RWPE1 (cell line): ENCODE measurements at regions of chr1 and their contacts with region 1.

Region 1: DNA sequence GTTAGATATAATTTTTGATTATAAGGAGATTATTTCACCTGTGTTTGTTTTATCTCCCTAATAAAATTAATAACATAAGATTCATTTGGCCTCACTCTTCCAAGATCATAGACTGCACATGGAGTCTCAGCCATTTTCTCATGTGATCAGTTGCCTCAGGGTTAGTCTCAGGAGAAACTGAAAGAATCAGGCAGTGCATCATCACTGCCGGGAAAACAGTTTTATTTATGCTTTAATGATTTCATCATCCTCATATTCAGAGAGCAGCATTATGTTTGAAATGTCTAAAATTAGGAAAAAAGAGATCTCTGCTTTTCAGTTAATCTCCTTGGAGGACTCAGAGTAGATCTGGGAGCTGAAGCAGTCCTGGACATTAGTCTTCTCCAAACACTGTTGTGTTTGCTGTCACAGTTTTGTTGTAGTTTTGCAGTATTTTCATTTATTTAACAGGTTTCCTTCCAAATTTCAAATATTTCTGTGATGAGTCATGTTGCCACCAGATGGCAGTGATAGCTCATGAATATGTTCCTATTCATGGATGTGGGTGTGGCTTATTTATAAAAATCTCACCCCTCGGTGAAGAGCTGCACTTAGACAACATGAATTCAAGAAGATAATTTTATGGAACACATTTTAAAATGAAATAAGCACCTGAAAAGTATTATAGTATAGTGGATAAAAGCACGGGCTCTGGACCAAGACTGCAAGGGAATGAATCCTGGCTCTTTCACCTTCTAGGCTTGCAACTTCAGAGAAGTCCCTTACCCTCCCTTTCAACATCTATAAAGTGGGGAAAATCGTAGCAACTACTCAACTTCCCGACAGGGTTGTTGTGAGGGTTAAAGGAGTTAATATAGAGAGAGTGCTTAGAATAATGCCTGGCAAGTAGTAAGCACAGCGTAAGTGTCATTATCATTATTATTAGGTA is 31.2 kb downstream of the CHD1L start:
- DNase-seq: peak; percentile 74
- H3K27ac ChIP-seq: no peak overlapping the region
- CTCF ChIP-seq: peak; percentile 60

Region 2: GRCh38 chr1:147142886-147143285 is 130.8 kb before region 1 on chr1:
- CTCF ChIA-PET with region 1: no interaction called
- POLR2A ChIA-PET with region 1: no interaction called
- DNase-seq: no peak
- H3K27ac ChIP-seq: no peak overlapping the region
- CTCF ChIP-seq: no peak

Region 3: DNA sequence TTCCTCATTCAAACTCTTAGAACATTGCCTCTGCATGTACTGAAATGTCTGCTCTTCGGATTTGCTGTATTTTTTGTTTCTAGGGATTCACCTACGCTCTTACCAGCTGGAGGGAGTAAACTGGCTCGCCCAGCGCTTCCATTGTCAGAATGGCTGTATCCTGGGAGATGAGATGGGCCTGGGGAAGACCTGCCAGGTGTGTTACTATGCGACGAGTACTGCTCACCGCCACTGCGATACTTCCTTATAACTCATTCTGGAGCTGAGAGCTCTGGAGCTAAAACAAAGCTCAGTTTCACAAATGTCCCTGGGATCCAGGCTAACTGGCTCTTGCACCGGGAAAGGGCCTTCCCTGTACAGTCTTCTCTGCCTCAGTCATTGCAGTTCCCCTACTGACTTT is 21.1 kb before region 1 on chr1:
- CTCF ChIA-PET with region 1: no interaction called
- POLR2A ChIA-PET with region 1: no interaction called
- DNase-seq: no peak
- H3K27ac ChIP-seq: no peak overlapping the region
- CTCF ChIP-seq: no peak

Region 4: DNA sequence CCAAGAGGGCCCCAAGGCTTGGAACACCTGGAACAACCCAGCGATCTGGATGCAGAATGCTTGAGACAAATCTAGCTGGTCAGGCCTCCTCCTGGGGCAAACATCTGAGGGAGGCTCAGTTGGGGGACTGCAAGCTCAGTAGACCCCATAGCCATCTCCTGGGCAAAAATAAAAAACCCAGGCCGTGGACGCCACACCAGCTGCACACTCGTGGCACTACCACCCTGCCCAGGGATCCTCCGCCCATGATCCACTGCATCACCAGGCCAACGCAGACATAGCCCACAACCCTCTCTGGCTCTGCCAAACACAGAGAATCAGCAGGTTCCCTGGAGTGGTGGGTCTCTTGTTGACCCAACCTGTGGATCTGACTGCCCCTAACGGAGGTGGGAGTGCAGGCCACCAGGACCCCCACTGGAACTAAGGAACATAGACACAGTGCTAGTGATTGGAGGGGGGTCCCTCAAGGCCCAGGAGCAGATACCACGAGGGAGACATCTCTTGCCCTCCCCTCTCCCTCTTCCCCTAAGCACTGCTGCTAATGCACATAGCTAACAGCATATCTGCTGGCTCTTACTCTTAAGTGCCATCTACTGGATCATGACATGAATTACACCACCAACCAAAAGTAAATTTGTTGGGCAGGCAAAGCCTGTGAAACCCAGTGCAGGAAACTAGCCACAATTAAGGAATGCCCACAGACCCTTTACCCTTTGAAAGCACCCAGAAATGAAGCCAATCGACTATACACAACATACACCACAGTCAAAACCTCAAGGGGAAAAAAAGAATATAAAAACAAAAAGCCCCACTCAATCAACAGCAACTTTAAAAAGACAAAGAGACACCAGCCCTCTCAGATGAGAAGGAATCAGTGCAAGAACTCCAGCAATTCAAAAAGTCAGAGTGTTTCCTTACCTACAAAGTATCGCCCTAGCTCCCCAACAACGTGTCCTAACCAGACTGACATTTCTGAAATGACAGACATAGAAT is 116.2 kb after region 1 on chr1:
- CTCF ChIA-PET with region 1: interaction called, 38 read pairs
- POLR2A ChIA-PET with region 1: no interaction called
- DNase-seq: peak; percentile 29
- H3K27ac ChIP-seq: no peak overlapping the region
- CTCF ChIP-seq: peak; percentile 70

Region 5: DNA sequence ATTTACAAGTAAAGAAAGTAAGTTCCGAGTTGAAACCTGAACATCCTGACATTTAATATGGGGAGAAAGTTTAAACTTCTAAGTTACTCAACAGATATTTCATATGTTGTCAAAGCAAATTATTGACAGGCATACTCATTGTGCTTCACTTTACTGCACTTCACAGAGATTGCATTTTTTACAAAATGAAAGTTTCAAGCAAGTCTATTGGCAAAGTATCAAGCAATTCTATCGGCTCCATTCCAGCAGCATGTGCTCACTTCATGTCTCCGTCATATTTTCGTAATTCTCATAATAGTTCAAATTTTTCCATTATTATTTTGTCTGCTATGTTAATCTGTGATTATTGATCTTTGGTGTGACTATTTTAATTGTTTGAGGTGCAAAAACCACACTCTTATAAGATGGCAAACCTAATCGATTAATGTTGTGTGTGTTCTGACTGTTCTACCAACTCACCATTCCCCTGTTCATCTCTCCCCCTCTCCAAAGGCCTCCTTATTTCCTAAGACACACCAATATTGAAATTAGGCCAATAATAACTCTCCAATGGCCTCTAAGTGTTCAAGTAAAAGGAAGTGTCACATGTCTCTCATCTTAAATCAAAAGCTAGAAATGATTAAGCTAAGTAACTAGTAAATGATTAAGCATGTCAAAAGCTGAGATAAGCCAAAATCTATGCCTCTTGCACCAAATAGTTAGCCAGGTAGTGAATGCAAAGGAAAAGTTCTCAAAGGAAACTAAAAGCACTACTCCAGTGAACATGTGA is 199.5 kb after region 1 on chr1:
- CTCF ChIA-PET with region 1: no interaction called
- POLR2A ChIA-PET with region 1: no interaction called
- DNase-seq: no peak
- H3K27ac ChIP-seq: no peak overlapping the region
- CTCF ChIP-seq: no peak

Region 6: DNA sequence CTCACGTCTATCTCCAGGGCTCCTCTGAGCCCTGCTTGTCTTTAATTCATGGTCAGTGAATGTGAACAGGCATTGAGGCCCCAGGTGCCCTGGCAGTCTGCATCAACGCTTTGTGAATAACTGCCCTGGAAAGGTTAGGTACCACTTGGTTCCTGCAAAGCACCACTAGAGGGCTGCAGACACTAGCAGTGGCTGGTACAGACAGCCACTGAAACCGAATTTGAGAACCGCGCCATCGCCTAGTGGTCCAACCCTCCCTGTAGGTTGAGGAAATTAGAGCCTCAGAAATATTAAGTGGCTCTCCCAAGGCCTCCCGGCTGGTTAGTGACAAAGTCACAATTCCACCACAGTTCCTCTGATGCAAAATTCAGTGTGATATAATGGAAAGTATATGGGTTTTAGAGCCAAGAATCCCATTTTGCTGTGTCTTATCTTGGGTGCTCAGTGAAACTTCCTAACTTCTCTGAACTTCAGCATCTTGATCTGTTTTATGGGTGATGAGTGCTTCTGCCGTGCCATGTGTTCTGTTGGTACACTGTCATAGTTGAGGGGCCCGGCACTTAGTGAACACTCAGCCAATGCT is 221.4 kb after region 1 on chr1:
- CTCF ChIA-PET with region 1: interaction called, 10 read pairs
- POLR2A ChIA-PET with region 1: no interaction called
- DNase-seq: peak; percentile 74
- H3K27ac ChIP-seq: no peak overlapping the region
- CTCF ChIP-seq: peak; percentile 87